Activated CD4-positive, alpha-beta memory T cell treated with anti-CD3 and anti-CD28 coated beads for 36 hours (primary cell): ENCODE measurements at regions of chr13 and their contacts with region 1.

Region 1: DNA sequence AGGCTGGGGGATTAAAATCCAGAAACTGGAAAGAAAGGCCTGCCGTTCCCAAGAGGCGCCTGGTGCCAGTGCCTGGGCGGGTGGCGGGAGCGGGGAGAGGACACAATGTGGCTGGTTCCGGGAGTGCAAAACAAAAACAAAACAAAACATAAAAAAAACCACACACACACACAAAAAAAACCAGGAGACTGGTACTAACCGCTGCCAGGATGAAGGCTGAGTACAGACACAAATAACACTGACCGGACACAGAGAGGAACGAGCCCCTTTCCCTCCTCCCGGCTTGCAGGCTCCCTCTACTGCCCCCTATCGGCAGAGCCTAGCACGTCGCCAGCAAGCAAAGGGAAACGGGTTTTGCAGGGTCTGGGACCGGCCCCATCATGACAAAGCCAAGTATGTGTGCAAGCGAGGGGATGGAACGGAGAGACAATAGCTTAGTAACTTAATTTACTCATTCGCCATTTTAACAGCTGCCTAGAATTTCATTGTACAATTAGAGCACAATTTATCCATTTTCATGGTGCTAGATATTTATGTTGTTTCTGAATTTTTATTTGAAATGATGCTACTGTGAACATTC is 17.9 kb upstream of the ZDHHC20 start:
- DNase-seq: peak; percentile 89
- H3K4me3 Mint-ChIP-seq: peak overlapping the region; percentile 65
- H3K27ac Mint-ChIP-seq: no peak overlapping the region
- H3K4me1 Mint-ChIP-seq: peaks cover 12% of the 10 kb centered on the region
- H3K27me3 Mint-ChIP-seq: no peaks in the 10 kb centered on the region

Region 2: GRCh38 chr13:20997430-20998161 is 479.4 kb before region 1 on chr13:
- CTCF ChIA-PET with region 1: no interaction called
- POLR2A ChIA-PET with region 1: no interaction called
- intact Hi-C with region 1: no loop called
- DNase-seq: no peak
- H3K4me3 Mint-ChIP-seq: no peak overlapping the region
- H3K27ac Mint-ChIP-seq: no peak overlapping the region
- H3K4me1 Mint-ChIP-seq: peaks cover 2% of the 10 kb centered on the region
- H3K27me3 Mint-ChIP-seq: no peaks in the 10 kb centered on the region

Region 3: GRCh38 chr13:21106089-21106488 is 370.9 kb before region 1 on chr13:
- CTCF ChIA-PET with region 1: interaction called, 8 read pairs
- POLR2A ChIA-PET with region 1: no interaction called
- intact Hi-C with region 1: loop called (anchors 1 kb)
- DNase-seq: no peak
- H3K4me3 Mint-ChIP-seq: no peak overlapping the region
- H3K27ac Mint-ChIP-seq: no peak overlapping the region
- H3K4me1 Mint-ChIP-seq: no peaks in the 10 kb centered on the region
- H3K27me3 Mint-ChIP-seq: no peaks in the 10 kb centered on the region

Region 4: DNA sequence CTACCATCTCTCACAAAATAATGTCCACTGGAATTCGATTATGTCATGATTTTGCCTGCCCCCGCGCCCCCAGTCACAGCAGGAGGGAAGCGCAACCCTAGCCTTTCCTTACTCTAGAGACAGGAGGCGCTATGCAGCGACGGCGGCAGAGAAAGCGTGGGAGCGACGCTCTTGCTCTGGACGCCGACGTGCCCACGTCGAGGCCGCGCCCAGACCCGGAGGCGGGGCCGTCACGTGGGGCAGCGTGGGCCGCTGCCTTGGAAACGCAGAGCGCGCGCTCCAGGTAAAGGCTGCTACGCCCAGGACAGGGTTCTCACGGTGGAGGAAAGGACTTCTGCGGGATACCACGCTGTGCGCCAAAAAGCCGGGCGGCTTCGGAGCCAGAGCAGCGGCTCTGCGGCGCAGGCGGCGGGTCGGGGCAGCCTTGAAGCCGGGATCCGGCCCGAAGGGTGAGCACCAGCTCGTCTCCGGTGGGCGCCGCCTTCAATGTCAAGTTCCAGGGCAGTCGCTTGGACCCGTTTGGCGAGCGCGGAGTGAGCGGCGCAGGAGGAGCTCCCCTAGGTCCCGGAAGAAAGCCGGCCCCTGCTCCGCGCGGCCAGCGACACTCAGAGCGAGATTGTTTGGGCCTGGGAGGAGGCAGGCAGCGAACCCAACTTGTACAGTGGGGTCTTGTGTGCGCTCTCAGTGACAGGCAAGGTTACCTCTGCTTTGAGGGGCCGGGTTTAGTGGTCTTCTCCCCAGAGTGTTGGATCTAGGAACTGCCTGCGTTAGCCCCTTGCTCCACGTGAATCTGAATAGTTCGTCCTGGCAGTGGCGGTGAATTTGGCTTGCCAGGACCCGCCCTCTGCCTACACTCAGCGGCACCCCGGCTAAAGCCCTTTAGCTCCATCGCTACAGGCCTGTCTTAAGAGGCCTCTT is 178.8 kb before region 1 on chr13:
- CTCF ChIA-PET with region 1: interaction called, 170 read pairs
- POLR2A ChIA-PET with region 1: no interaction called
- intact Hi-C with region 1: loop called (anchors 1 kb)
- DNase-seq: peak; percentile 91
- H3K4me3 Mint-ChIP-seq: peak overlapping the region; percentile 87
- H3K27ac Mint-ChIP-seq: peak overlapping the region; percentile 59
- H3K4me1 Mint-ChIP-seq: peaks cover 25% of the 10 kb centered on the region
- H3K27me3 Mint-ChIP-seq: no peaks in the 10 kb centered on the region

Region 5: GRCh38 chr13:21420706-21421105 is 56.3 kb before region 1 on chr13:
- CTCF ChIA-PET with region 1: interaction called, 12 read pairs
- POLR2A ChIA-PET with region 1: no interaction called
- intact Hi-C with region 1: no loop called
- DNase-seq: no peak
- H3K4me3 Mint-ChIP-seq: no peak overlapping the region
- H3K27ac Mint-ChIP-seq: no peak overlapping the region
- H3K4me1 Mint-ChIP-seq: peaks cover 13% of the 10 kb centered on the region
- H3K27me3 Mint-ChIP-seq: no peaks in the 10 kb centered on the region